Right ventricle myocardium inferior (tissue), 1 donor: ENCODE measurements at regions of chr4 and their contacts with region 1.

Region 1: DNA sequence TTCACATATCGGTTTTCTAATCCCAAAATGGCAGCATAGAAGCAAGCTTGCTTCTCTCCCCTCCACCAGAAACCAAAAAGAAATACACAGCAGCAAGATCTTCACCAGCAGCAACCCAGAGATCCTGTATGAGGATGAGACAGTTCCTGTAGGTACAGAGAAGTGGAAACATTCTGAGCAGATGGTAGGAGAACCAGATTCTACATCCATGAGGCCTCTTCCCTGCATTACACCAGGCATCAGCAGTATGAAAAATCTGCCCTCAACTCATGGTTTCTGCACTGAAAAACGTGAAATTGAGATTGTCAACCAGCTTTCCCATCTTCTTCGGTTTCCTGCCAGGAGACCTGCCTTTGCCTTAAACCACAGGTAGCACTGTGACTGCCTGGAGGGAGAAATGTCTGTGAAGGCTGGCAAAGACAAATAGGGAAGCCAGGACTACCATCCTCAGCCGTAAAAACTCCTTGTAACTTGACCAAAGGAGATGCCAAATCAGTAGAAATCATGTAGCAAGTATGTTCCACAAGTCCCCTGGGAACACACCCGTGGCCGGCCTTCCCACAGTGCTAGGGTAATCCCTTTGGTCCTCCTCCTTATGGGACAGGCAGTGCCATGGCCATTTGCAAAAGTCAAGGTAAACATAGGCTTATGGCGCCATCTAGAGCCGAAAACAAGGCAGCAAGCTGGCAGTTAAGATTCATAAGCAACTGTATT is 24.0 kb upstream of the MTHFD2L start:
- DNase-seq: peak; percentile 75
- ATAC-seq: peak; percentile 76

Region 2: GRCh38 chr4:73311428-73311827 is 822.5 kb before region 1 on chr4:
- intact Hi-C with region 1: loop called (anchors 10 kb)
- DNase-seq: no peak
- ATAC-seq: no peak

Region 3: GRCh38 chr4:73593631-73594241 is 540.2 kb before region 1 on chr4:
- intact Hi-C with region 1: loop called (anchors 5 kb)
- DNase-seq: no peak
- ATAC-seq: no peak

Region 4: GRCh38 chr4:73662709-73663546 is 471.0 kb before region 1 on chr4:
- intact Hi-C with region 1: loop called (anchors 2 kb)
- DNase-seq: no peak
- ATAC-seq: no peak

Region 5: GRCh38 chr4:73729534-73730165 is 404.3 kb before region 1 on chr4:
- intact Hi-C with region 1: loop called (anchors 5 kb)
- DNase-seq: peak; percentile 68
- ATAC-seq: peak; percentile 95

Region 6: GRCh38 chr4:73922766-73923630 is 210.9 kb before region 1 on chr4:
- intact Hi-C with region 1: loop called (anchors 10 kb)
- DNase-seq: no peak
- ATAC-seq: no peak

Region 7: GRCh38 chr4:74098450-74098994 is 35.4 kb before region 1 on chr4:
- intact Hi-C with region 1: loop called (anchors 5 kb)
- DNase-seq: peak; percentile 77
- ATAC-seq: no peak

Region 8: DNA sequence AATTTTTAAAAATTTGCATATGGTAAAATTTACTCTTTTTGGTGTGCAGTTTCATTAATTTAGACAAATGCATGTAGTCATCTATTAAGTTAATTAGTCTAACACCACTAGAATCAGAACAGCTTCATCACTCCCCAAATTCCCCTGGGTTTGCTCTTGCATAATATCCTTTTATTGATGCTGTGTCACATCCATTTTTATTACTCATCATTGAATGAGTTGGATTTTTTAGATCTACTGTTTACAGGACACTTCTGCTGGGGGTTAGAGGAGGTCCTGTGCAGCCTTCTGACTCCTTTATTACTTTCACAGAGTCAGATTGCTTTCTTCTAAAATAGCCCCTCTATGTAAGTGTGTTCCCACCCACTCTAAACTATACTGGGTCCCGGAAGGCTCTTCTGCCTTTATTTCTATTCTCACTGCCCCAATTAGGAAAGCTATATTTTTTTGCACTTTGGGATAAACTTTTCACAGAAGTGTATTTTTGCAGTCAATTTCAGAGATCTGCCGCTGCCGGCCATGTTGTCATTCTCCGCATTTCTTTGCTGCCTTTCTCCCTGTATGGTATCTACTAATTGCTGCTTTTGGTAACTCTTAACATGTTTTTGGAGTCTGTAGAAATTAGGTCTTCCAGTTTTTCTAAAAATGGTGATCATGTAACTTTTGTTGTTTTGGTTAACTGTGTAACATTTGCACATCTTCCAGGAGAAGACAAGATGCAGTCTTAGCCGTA is 90.0 kb after region 1 on chr4:
- intact Hi-C with region 1: no loop called
- DNase-seq: no peak
- ATAC-seq: no peak